Spleen (tissue), 13 donors: ENCODE measurements at regions of chr1 and their contacts with region 1.

Region 1: DNA sequence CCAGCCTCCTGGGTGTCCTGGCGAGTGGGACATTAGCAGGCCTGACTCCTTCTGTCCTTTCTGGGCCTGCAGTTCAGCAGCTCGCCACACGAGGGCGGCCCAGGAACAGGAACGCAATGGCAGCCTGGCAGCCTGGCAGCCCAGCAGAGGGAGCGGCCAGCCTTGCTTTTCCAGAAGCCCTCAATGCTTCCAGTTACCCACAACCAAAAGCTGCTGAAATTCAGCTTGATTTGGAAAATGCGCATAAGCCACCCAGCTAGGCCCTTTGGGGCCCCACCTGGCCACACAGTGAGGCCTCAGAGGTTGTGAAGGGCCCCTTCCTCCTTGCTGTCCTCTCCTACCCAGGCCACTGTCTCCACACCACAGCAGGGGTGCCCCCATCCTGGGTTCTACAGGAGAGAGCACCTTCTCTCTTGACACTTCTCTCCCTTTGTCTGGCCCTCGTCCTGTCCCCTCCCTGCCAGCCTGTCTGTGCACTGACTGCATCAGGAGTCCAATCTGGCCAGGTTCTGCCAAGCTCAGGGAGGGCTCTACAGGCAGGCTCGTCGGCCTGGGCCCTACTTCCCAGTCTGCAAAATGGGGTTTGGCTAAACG is 103.4 kb upstream of the VAMP3 start:
- DNase-seq: peak; percentile 95
- H3K4me3 ChIP-seq: no peak overlapping the region
- H3K27ac ChIP-seq: no peak overlapping the region
- H3K4me1 ChIP-seq: peaks cover 0 to 30% (median 16%) of the 10 kb centered on the region in 6 donors
- H3K27me3 ChIP-seq: peaks cover 0 to 13% (median 6%) of the 10 kb centered on the region in 7 donors
- CTCF ChIP-seq: peak; percentile 96 to 100 (median 99)
- POLR2A ChIP-seq: no peak

Region 2: GRCh38 chr1:7752512-7753417 is 85.0 kb after region 1 on chr1:
- intact Hi-C with region 1: loop called (anchors 2 kb)
- DNase-seq: no peak
- H3K4me3 ChIP-seq: peak overlapping the region in 2 of 8 donors; percentile 4 to 48
- H3K27ac ChIP-seq: peak overlapping the region in 2 of 8 donors; percentile 9 to 19
- H3K4me1 ChIP-seq: peaks cover 6 to 47% (median 29%) of the 10 kb centered on the region in 6 donors
- H3K27me3 ChIP-seq: no peaks in the 10 kb centered on the region
- CTCF ChIP-seq: peak; percentile 42 to 86 (median 74)
- POLR2A ChIP-seq: no peak

Region 3: GRCh38 chr1:7902478-7903085 is 234.9 kb after region 1 on chr1:
- intact Hi-C with region 1: loop called (anchors 2 kb)
- DNase-seq: peak; percentile 85
- H3K4me3 ChIP-seq: peak overlapping the region in 4 of 8 donors; percentile 7 to 58 (median 26)
- H3K27ac ChIP-seq: peak overlapping the region in 1 of 8 donors; percentile 31
- H3K4me1 ChIP-seq: peaks cover 0 to 7% (median 6%) of the 10 kb centered on the region in 6 donors
- H3K27me3 ChIP-seq: no peaks in the 10 kb centered on the region
- CTCF ChIP-seq: peak in 10 of 11 experiments; percentile 27 to 71 (median 64)
- POLR2A ChIP-seq: no peak

Region 4: GRCh38 chr1:8482979-8483391 is 815.3 kb after region 1 on chr1:
- intact Hi-C with region 1: no loop called
- DNase-seq: no peak
- H3K4me3 ChIP-seq: no peak overlapping the region
- H3K27ac ChIP-seq: no peak overlapping the region
- H3K4me1 ChIP-seq: peaks cover 0 to 41% (median 3%) of the 10 kb centered on the region in 6 donors
- H3K27me3 ChIP-seq: no peaks in the 10 kb centered on the region
- CTCF ChIP-seq: no peak
- POLR2A ChIP-seq: no peak